GM10248 (cell line): ENCODE measurements at regions of chr6 and their contacts with region 1.

Region 1: DNA sequence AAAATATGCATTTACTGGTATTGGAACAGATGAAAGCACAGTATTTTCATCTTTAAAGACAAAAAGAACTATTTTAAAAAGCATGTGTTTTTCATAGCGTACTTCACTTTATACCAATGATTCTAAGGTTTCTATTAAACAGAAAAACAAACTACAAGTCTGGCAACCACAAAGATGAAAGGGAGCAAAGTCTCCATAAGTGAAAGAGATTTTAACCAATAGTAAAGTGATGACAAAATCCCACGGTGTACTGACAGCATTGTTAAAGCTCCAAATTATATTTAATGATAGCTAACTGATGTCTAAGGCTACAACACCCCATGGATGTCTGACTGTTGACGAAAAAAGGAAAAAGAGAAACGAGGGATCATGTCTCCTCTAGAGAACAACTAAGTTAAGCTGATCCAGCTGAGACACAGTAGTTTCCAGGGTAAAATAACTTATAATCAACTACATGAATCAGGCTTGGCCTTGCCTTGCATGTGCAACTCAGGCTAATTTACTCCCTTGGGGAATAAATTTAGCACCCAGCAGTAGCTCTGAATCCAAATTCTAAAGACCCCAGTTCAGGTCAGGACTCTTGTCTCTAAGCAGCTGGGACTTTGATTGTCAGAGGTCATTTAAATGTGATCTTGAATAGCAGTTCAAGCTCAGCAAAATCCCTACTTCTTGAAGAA is 56.0 kb upstream of the TAB2 start:
- DNase-seq: no peak
- CTCF ChIP-seq: no peak

Region 2: GRCh38 chr6:149271348-149272340 is 10.1 kb after region 1 on chr6:
- CTCF ChIA-PET with region 1: interaction called, 11 read pairs
- POLR2A ChIA-PET with region 1: interaction called, 3 read pairs
- DNase-seq: peak; percentile 62
- CTCF ChIP-seq: no peak

Region 3: DNA sequence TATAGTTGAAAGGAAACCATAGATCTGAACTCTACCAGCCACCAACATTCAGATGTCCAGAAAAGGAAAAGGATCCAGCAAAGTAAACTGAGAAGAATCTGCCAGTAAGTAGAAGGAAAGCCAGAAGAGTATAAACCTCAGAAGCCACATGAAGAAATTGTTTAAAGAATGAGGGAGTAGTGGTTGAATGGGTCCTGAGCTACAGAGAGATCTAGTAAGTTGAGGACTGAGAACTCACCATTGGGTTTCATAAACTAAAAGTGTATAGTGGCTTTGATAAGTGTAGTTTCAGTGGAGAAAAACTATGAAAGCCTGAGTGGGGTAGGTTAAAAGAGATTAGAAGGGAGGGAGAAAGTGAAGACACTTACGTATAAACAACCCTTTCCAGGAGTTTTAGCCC is 106.6 kb after region 1 on chr6:
- CTCF ChIA-PET with region 1: no interaction called
- POLR2A ChIA-PET with region 1: no interaction called
- DNase-seq: no peak
- CTCF ChIP-seq: no peak